ENCODE measurements at regions of chr10 and their contacts with region 1.

Region 1: DNA sequence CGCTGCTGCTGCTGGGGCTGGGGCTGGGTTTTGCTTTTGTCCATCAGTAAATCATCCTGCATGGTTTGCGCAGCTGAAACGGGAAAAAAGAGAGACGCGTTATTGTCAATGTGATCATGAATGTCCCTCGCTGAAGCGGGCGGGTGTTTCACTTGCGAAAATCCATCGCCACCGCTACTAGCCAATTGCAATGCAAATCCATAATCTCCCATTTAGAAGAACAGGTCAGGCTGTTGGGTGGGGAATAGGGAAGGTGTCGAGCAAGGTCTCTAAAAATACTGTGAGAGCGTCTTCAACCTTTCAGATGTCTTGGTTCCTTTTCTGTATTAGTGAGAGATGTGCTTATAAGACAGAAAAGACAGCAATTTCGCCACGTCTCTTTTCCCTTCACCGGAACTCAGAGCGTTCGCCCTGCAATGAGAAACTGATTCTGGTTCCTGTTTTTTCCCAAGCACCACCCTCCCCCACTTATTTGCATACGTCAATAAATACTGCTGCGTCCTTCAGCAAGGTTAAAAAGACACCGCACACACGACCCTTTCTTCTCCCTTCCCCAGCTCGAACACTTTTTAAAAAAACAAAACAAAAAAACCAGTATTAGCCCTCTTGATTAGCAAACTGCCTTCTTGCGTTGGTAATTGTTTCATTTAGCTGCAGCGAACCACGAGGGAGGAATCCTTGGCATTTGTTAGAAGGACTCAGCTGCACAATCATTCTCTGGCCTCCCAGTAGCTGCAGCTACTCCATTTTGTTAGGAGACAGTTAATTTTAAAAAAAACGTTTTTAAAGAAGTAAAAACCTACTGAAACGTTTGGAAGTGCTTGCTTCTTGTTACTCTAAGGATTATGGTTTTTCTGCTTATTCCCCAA is 50.4 kb downstream of the CPEB3 start:
- DNase-seq: peak; percentile 28
- H3K4me3 Mint-ChIP-seq: peak overlapping the region; percentile 92
- H3K27ac Mint-ChIP-seq: peak overlapping the region; percentile 27
- H3K4me1 Mint-ChIP-seq: peaks cover 32% of the 10 kb centered on the region
- H3K27me3 Mint-ChIP-seq: peaks cover 14% of the 10 kb centered on the region

Region 2: DNA sequence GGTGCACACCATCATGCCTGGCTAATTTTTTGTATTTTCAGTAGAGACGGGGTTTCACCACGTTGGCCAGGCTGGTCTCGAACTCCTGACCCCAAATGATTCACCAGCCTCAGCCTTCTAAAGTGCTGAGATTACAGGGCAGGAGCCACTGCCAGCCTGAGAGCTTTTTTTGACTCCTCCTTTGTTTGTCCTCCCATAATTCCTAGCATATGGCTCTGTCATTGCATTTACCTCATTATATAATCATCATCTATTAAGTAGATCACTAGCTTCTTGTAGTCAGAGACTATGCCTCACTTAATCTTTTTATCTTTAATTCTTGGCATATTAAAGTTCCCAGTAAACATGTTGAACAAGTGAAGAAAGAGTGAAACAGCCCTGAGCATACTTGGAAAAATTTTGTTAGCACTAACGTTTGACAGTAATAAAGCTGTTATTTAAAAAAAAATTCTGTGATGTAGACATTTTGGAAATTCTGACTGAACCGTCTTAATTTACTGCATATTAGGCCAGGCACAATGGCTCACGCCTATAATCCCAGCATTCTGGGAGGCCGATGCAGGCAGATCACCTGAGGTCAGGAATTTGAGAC is 31.7 kb before region 1 on chr10:
- intact Hi-C with region 1: loop called (anchors 2 kb)
- DNase-seq: no peak
- H3K4me3 Mint-ChIP-seq: no peak overlapping the region
- H3K27ac Mint-ChIP-seq: no peak overlapping the region
- H3K4me1 Mint-ChIP-seq: peaks cover 20% of the 10 kb centered on the region
- H3K27me3 Mint-ChIP-seq: no peaks in the 10 kb centered on the region

Region 3: DNA sequence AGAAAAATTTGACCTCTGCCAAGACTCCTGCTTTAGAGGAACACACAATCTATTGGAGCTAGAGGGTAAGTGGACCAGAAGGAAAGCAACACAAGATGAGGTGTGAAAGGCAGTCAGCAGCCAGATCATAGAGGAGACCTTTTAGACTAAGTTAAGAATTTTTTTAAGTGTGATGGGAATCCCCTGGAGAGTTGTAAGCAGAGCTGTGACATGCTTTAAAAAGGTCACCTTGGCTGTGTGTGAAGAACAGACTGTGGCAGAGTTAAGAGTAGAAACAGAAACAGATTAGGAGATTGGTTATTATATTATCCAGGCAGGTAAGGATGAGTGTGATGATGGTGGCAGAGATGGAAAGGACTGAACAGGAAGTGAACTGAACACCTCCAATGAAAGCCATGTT is 26.8 kb after region 1 on chr10:
- intact Hi-C with region 1: loop called (anchors 2 kb)
- DNase-seq: no peak
- H3K4me3 Mint-ChIP-seq: no peak overlapping the region
- H3K27ac Mint-ChIP-seq: peak overlapping the region; percentile 16
- H3K4me1 Mint-ChIP-seq: peaks cover 28% of the 10 kb centered on the region
- H3K27me3 Mint-ChIP-seq: no peaks in the 10 kb centered on the region

Measured in activated T-helper 1 cell treated with anti-CD3 and anti-CD28 coated beads, Interleukin-12 subunit alpha, Interleukin-12 subunit beta, Interleukin-2, Interleukin-4 antibody, amounts not matched to agents 30 ng/mL and 10 ng/mL and 1 ng/mL, durations not matched to agents 14 hours and 24 hours and 36 hours (primary cell).